Activated CD8-positive, alpha-beta T cell treated with anti-CD3 and anti-CD28 coated beads, Interleukin-2, amount 10 ng/mL, durations not matched to agents 7 days and 5 days (primary cell): ENCODE measurements at regions of chr21 and their contacts with region 1.

Region 1: DNA sequence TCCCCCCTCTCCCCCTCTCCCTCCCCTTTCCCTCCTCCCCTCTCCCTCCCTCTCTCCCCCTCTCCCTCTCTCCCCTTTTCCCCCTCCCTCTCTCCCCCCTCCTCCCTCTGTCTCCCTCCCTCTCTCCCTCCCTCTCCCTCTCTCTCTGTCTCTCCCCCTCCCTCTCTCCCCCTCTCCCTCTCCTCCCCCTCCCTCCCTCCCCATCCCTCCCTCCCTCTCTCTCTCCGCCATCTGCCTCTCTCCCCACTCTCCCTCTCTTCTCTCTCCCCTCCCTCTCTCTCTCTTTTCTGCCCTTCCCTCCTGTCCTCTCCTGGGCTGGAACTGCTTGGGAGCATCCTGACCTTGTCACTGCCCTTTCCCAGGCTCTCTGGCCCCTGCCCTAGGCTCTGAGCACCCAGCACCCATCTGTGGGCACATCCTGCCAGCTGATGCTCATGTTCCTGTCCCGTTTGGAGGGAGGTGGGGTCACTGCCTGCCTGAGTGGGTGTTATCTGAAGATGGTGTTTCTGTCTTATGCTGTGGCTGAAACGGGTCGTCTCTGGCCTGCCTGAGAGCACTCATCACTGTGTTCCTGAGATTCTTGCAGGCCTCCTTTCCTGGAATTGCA is 10.8 kb downstream of the FTCD start:
- DNase-seq: no peak
- ATAC-seq: no peak
- H3K4me3 Mint-ChIP-seq: no peak overlapping the region
- H3K27ac Mint-ChIP-seq: peak overlapping the region; percentile 65
- H3K4me1 Mint-ChIP-seq: peaks cover 21% of the 10 kb centered on the region
- H3K27me3 Mint-ChIP-seq: no peaks in the 10 kb centered on the region

Region 2: DNA sequence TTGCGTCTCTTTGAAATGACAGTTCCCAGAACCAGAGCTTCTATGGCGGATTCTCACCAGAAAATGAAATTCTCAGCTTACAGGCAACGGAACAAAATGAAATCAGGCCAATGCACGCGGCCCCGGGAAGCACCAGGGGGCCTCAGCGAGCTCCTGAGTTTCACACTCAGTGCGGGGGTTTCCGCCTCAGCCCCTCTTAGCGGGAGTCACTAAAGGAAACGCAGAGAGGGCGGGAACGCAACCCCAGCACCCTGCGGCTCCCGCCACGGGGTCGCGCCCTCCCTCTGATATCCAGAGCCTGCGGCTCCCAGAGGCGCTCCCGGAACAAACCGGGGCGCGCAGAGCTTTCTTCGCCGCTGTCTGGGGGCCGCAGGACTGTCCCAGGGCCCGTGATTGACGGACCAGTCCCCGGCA is 170.9 kb before region 1 on chr21:
- CTCF ChIA-PET with region 1: interaction called, 49 read pairs
- POLR2A ChIA-PET with region 1: interaction called, 5 read pairs
- DNase-seq: peak; percentile 88
- ATAC-seq: peak; percentile 86
- H3K4me3 Mint-ChIP-seq: peak overlapping the region; percentile 78
- H3K27ac Mint-ChIP-seq: peak overlapping the region; percentile 57
- H3K4me1 Mint-ChIP-seq: peaks cover 18% of the 10 kb centered on the region
- H3K27me3 Mint-ChIP-seq: peaks cover 20% of the 10 kb centered on the region

Region 3: DNA sequence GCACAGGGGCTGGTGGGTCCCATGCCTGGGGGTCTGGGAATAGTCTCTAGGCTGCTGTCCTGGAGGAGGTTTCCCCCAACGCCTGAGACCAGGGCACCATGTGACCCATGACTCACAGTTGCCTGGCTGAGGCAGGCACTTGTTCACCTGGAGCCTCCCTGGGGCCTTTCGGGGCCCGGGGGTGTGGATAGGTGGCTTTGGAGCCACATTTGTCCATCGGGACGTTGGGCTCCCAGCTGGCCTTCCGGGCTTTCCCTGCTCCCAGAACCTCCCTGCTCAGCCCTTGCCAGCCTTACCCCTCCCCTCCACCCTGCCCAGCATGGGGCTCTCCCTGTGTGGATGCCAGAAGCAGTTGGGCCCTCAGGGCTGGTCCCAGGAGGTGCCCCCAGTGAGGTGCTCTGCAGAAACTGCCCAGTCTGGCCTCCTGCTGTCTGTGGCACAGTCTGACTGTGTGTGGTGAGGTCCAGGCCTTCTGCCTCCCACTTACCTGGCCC is 148.8 kb before region 1 on chr21:
- CTCF ChIA-PET with region 1: no interaction called
- POLR2A ChIA-PET with region 1: no interaction called
- DNase-seq: no peak
- ATAC-seq: no peak
- H3K4me3 Mint-ChIP-seq: no peak overlapping the region
- H3K27ac Mint-ChIP-seq: no peak overlapping the region
- H3K4me1 Mint-ChIP-seq: no peaks in the 10 kb centered on the region
- H3K27me3 Mint-ChIP-seq: no peaks in the 10 kb centered on the region

Region 4: DNA sequence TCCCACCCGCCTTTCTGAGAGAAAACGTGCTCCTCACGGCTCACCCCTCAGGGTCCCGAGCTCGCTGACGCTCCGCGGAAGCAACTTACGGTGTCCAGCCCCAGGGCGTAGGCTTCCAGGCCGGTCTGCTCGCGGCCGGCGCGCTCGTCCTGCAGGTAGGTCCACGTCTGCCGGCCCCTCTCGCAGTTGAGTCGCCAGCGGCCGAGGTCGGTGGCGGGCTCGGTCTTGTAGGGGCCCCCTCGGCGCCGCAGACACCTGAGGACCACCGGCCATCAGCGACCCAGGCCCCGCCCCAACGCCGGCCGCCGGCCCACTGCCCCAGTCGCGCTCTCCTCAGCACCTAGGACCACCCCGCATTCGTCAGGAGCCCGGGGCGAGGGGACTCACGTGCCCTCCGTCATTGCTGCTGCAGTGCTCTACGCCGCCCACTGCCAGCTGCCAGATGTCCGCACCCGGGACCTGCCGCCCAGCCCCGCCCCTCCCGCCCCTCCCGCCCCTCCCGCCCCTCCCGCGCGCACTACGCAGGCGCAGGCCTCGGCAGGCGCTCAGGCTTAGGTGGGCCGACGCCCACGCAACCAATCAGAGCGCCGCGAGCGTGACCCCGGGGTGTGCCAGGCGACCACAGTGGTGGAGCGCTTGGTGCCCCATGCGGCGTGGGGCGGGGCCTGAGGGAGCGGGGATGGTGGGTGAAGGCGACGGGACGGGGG is 83.9 kb after region 1 on chr21 and contains the start of gene LSS:
- CTCF ChIA-PET with region 1: interaction called, 11 read pairs
- POLR2A ChIA-PET with region 1: no interaction called
- DNase-seq: peak; percentile 99
- ATAC-seq: peak; percentile 98
- H3K4me3 Mint-ChIP-seq: peak within 1 kb of the TSS; percentile 98
- H3K27ac Mint-ChIP-seq: peak within 1 kb of the TSS; percentile 99
- H3K4me1 Mint-ChIP-seq: peaks cover 55% of the 10 kb centered on the region
- H3K27me3 Mint-ChIP-seq: no peaks in the 10 kb centered on the region
- total RNA-seq, gene LSS: 72.1 to 76.1 TPM

Region 5: DNA sequence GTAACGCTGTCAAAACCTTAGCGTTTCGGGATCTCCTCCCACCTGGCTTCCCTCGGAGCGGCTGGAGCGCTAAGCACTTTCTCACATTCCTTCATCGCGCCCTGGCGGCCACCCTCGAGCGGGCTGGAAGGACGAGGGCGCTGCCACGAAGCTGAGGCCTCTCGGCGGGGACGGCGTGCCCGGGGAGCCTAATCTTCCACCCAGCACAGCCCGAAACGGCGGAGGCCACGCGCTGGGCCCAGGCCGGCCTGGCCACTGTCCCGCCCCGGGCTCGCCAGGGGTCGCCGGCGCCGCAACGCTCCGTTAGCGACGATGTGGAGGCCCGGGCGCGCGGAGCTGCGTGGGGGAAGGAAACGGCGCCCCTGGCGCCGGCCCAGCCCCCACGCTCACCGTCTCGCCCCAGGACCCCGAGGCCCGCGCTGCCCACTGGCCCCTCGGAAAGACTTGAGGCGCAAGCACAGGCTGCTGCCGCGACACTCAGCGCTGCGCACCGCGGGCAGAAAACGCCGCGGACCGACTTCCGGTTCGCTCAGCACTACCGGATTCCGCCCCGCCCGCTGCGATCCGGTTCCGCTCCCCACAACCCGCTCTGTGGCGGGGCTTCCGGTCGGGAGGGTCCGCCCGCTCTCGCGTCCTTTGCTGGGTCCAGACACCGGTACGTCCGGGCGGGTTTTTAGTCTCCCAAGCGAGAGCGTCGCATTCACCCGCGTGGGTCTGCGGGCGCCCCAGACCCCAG is 141.4 kb after region 1 on chr21 and contains the start of gene YBEY:
- CTCF ChIA-PET with region 1: interaction called, 21 read pairs
- POLR2A ChIA-PET with region 1: no interaction called
- DNase-seq: peak; percentile 92
- ATAC-seq: peak; percentile 88
- H3K4me3 Mint-ChIP-seq: peak within 1 kb of the TSS; percentile 95
- H3K27ac Mint-ChIP-seq: peak within 1 kb of the TSS; percentile 96
- H3K4me1 Mint-ChIP-seq: peaks cover 58% of the 10 kb centered on the region
- H3K27me3 Mint-ChIP-seq: no peaks in the 10 kb centered on the region
- total RNA-seq, gene YBEY: 13.4 to 15.2 TPM

Region 6: DNA sequence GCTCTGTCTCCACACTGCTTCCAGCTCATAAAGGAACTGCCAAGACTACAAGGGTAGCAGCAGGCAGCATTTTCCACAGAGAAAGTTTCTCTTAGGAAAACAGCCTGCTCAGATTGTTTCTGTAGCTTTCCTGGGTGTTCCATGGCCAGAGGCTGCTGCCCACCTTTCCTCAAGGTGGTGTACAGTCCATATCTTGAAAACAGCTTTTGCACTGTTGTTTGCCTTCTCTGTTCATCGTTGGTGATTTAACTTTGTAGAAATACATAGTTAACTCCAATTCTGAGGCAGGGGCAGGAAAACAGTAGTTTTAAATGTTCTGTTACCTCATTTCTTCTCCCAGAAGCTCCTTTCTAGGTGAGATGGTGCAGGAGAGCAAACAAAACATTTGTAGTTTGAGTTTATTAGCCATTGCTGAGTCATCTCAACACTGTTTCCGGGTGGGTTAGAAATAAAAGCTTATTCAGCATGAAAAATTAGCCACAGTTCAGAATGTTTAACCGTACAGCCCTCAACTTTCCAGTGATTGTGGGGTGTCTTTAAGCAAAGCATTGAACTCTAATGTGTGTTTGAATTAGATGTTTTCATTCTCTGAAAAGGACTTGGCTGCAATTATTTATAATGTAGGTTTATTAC is 355.8 kb after region 1 on chr21:
- CTCF ChIA-PET with region 1: interaction called, 10 read pairs
- POLR2A ChIA-PET with region 1: no interaction called
- DNase-seq: no peak
- ATAC-seq: peak; percentile 42
- H3K4me3 Mint-ChIP-seq: no peak overlapping the region
- H3K27ac Mint-ChIP-seq: peak overlapping the region; percentile 69
- H3K4me1 Mint-ChIP-seq: peaks cover 24% of the 10 kb centered on the region
- H3K27me3 Mint-ChIP-seq: no peaks in the 10 kb centered on the region